ENCODE measurements at regions of chr15 and their contacts with region 1.

Region 1: DNA sequence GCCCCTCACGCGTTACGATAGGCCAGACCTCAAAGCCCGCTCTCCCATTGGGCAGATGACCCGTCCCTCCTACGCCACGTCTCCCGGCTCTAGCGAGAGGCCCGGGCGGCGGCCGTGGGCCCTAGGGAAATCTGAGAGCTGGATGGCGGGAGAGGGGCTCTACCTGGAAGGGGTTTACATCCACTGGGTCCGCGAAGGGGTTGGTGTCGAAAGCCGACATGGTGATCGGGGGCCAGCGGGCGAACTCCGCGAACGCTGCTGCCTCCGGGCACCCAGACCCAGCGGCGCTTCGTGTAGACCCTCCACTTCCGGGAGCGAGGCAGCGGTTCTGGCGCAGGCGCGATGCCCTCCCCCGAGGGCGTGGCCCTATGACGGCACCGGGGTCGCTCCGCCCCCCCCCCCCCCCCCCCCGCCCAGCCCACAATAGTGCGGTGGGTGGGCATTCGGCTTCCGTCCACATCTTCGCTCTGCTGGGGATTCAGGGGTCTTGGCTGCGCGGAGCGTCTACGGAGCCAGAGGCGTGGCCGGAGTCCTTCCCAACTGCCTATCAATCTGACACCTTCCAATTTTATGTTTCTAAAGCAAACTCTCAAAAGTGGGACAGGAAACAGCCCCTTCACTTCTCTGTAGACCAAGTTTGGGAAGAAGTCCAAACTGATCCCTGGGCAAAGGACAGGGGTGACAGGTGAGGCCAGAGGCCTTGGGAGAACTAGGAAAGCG is at the start of gene SCAMP2:
- DNase-seq: peak; percentile 95
- H3K4me3 Mint-ChIP-seq: peak within 1 kb of the TSS; percentile 100
- H3K27ac Mint-ChIP-seq: peak within 1 kb of the TSS; percentile 95
- H3K4me1 Mint-ChIP-seq: peaks cover 27% of the 10 kb centered on the region
- H3K27me3 Mint-ChIP-seq: no peaks in the 10 kb centered on the region
- CTCF ChIP-seq: no peak
- total RNA-seq, gene SCAMP2: 64.4 and 67.7 TPM in 2 replicates

Region 2: GRCh38 chr15:74842581-74843444 is 30.4 kb before region 1 on chr15 and contains the start of gene ULK3:
- CTCF ChIA-PET with region 1: interaction called, 5 read pairs
- POLR2A ChIA-PET with region 1: interaction called, 18 read pairs
- intact Hi-C with region 1: loop called (anchors 1 kb)
- DNase-seq: peak; percentile 89
- H3K4me3 Mint-ChIP-seq: peak within 1 kb of the TSS; percentile 83
- H3K27ac Mint-ChIP-seq: peak within 1 kb of the TSS; percentile 49
- H3K4me1 Mint-ChIP-seq: no peaks in the 10 kb centered on the region
- H3K27me3 Mint-ChIP-seq: no peaks in the 10 kb centered on the region
- CTCF ChIP-seq: peak; percentile 76
- total RNA-seq, gene ULK3: 27.6 and 31.3 TPM in 2 replicates

Region 3: DNA sequence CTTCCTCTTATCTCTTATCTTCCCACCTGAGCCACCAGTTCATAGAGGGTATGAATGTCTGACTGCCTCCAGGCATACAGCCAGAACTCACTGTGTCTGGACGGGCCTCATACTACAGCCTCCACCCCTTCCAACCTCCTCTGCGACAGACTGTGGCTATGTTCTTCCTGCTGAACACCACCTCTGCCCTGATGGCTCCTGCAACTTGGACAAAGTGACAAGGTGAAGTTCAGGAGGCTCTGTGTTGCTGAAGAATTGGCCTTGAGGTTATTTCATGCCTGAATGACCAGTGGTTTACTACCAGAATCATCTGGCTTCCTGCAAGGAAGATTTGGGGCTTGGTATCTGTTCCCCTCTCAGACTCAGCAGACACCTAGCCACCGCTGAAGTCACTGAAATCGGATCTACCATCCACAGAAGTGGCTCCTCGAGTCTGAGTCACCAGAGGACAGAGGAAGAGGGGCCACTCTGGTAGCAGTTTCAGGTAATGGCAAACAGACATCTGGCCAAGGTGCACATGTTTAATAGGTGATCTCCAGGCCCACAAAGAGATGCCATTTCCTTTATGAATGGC is 16.0 kb before region 1 on chr15:
- CTCF ChIA-PET with region 1: interaction called, 4 read pairs
- POLR2A ChIA-PET with region 1: interaction called, 19 read pairs
- intact Hi-C with region 1: no loop called
- DNase-seq: no peak
- H3K4me3 Mint-ChIP-seq: no peak overlapping the region
- H3K27ac Mint-ChIP-seq: no peak overlapping the region
- H3K4me1 Mint-ChIP-seq: no peaks in the 10 kb centered on the region
- H3K27me3 Mint-ChIP-seq: no peaks in the 10 kb centered on the region
- CTCF ChIP-seq: no peak

Region 4: GRCh38 chr15:74889883-74890664 is 16.9 kb after region 1 on chr15 and contains the start of gene MPI:
- CTCF ChIA-PET with region 1: no interaction called
- POLR2A ChIA-PET with region 1: interaction called, 16 read pairs
- intact Hi-C with region 1: no loop called
- DNase-seq: peak; percentile 73
- H3K4me3 Mint-ChIP-seq: peak within 1 kb of the TSS; percentile 79
- H3K27ac Mint-ChIP-seq: peak within 1 kb of the TSS; percentile 11
- H3K4me1 Mint-ChIP-seq: peaks cover 25% of the 10 kb centered on the region
- H3K27me3 Mint-ChIP-seq: no peaks in the 10 kb centered on the region
- CTCF ChIP-seq: no peak
- total RNA-seq, gene MPI: 30.8 and 31.4 TPM in 2 replicates

Region 5: DNA sequence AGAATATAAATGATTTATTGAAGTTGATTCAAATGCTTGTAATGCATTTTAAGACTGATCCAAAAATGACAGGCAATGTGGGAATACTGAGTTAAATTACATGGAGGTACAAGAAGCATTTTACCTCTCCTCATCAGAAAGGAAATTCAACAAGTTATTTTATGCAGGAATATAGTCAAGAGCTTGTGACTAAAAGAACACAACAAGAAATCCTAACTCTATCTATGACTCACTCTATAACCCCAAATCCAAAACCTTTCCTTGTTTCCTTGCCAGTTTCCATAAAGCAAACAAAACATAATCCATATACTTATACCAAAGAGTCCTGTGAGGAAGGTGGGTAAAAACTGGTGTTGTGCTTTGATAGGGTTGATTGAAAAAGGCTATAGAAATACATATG is 547.5 kb after region 1 on chr15:
- CTCF ChIA-PET with region 1: no interaction called
- POLR2A ChIA-PET with region 1: no interaction called
- intact Hi-C with region 1: no loop called
- DNase-seq: peak; percentile 11
- H3K4me3 Mint-ChIP-seq: no peak overlapping the region
- H3K27ac Mint-ChIP-seq: no peak overlapping the region
- H3K4me1 Mint-ChIP-seq: no peaks in the 10 kb centered on the region
- H3K27me3 Mint-ChIP-seq: no peaks in the 10 kb centered on the region
- CTCF ChIP-seq: no peak

Measured in MCF 10A (cell line).